ENCODE measurements at regions of chr1 and their contacts with region 1.

Region 1: GRCh38 chr1:42209621-42210251 is 45.2 kb upstream of the GUCA2A start:
- DNase-seq: peak; percentile 64 to 68
- H3K4me3 ChIP-seq: no peak overlapping the region
- H3K27ac ChIP-seq: peak overlapping the region; percentile 66
- H3K4me1 ChIP-seq: peaks cover 99% of the 10 kb centered on the region
- H3K27me3 ChIP-seq: no peaks in the 10 kb centered on the region
- CTCF ChIP-seq: no peak

Region 2: GRCh38 chr1:42221952-42222606 is 12.3 kb after region 1 on chr1:
- CTCF ChIA-PET with region 1: interaction called, 3 read pairs
- POLR2A ChIA-PET with region 1: interaction called, 7 read pairs
- intact Hi-C with region 1: loop called (anchors 1 kb)
- DNase-seq: peak; percentile 22 to 93
- H3K4me3 ChIP-seq: no peak overlapping the region
- H3K27ac ChIP-seq: peak overlapping the region; percentile 51
- H3K4me1 ChIP-seq: peaks cover 65% of the 10 kb centered on the region
- H3K27me3 ChIP-seq: no peaks in the 10 kb centered on the region
- CTCF ChIP-seq: no peak

Region 3: GRCh38 chr1:42298520-42298919 is 88.8 kb after region 1 on chr1:
- CTCF ChIA-PET with region 1: no interaction called
- POLR2A ChIA-PET with region 1: no interaction called
- intact Hi-C with region 1: no loop called
- DNase-seq: no peak
- H3K4me3 ChIP-seq: no peak overlapping the region
- H3K27ac ChIP-seq: no peak overlapping the region
- H3K4me1 ChIP-seq: no peaks in the 10 kb centered on the region
- H3K27me3 ChIP-seq: no peaks in the 10 kb centered on the region
- CTCF ChIP-seq: no peak